Cardiac septum (tissue), 1 donor: ENCODE measurements at regions of chr11 and their contacts with region 1.

Region 1: DNA sequence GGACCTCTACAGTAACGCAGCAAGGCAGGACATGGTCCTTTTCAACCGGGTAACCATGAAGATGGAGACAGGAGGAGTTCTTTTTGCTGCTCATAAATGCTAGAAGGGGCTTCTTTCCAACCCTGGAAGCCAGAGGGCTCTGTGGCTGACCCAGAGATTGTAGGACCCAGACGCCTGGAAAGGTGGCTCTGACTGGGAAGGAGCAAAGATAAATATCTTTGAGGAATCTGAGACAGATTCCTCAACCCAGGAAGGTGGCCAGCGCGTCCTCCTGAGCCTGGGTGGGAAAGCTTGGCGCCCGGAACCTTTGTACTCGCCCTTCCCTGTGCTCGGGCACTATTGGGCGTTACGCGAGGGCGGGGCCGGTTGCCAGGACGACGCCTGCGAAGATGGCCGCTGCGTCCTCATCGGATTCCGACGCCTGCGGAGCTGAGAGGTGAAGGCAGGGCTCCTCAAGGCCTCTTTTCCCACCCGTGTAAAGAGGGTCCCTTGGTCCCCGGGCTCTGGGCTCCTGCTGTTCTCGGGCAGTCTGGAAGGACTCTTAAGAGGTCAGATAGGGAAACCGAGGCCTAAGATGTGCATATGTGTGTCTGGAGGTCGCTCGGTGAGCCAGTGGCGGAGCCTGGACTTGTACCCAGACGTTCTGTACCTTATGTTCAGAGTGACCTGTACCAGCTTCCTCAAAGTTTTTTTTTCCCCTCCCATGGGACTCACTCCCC is at the start of gene BBS1:
- DNase-seq: peak; percentile 92
- total RNA-seq, gene BBS1: 19.5 TPM

Region 2: DNA sequence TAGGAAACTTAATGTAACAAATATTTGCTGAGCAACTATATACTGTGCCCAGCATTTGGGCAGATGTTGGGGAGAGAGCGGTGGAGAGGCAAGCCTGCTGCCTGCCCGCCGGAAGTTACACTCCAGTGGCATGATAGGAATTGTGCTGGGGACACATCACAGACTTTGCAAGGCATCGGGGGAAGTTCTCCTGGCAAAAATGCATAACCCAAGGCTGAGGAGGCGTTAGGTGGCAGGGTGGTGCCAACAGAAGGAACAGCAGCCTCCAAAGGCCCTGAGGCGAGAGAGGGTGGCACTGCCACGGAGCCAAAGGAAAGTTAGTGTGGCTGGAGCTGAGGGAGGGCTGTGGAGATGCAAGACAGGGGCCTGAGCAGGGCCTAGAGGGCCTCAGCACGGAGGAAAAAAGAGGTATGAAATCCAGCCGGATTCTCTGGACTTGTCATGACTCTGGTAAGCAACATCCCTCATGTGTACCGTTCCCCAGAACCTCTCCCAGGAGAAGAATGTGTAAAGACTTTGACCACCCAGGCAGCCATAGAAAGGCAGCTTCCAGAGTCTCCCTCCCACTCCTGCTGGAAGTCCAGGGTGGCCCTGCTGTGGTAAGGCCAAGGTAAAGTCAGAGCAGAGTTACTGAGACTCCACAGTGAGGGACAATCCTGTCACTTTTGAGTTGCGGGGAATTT is 318.1 kb before region 1 on chr11:
- intact Hi-C with region 1: no loop called
- DNase-seq: no peak

Region 3: GRCh38 chr11:66480117-66480938 is 30.1 kb before region 1 on chr11 and contains the start of gene DPP3:
- intact Hi-C with region 1: loop called (anchors 2 kb)
- DNase-seq: peak; percentile 98
- total RNA-seq, gene DPP3: 13.2 TPM